Mammary epithelial cell (primary cell): ENCODE measurements at regions of chr6 and their contacts with region 1.

Region 1: GRCh38 chr6:160733050-160733646 is 31.1 kb downstream of the PLG start:
- DNase-seq: peak; percentile 35
- H3K4me3 ChIP-seq: no peak overlapping the region
- H3K27ac ChIP-seq: no peak overlapping the region
- H3K4me1 ChIP-seq: no peaks in the 10 kb centered on the region
- H3K27me3 ChIP-seq: no peaks in the 10 kb centered on the region
- CTCF ChIP-seq: peak; percentile 83 to 90

Region 2: GRCh38 chr6:160337301-160337700 is 395.8 kb before region 1 on chr6:
- CTCF ChIA-PET with region 1: no interaction called
- dilution Hi-C with region 1: no loop called
- in situ Hi-C with region 1: no loop called
- intact Hi-C with region 1: no loop called
- DNase-seq: peak; percentile 76
- H3K4me3 ChIP-seq: no peak overlapping the region
- H3K27ac ChIP-seq: no peak overlapping the region
- H3K4me1 ChIP-seq: peaks cover 16% of the 10 kb centered on the region
- H3K27me3 ChIP-seq: no peaks in the 10 kb centered on the region
- CTCF ChIP-seq: no peak

Region 3: DNA sequence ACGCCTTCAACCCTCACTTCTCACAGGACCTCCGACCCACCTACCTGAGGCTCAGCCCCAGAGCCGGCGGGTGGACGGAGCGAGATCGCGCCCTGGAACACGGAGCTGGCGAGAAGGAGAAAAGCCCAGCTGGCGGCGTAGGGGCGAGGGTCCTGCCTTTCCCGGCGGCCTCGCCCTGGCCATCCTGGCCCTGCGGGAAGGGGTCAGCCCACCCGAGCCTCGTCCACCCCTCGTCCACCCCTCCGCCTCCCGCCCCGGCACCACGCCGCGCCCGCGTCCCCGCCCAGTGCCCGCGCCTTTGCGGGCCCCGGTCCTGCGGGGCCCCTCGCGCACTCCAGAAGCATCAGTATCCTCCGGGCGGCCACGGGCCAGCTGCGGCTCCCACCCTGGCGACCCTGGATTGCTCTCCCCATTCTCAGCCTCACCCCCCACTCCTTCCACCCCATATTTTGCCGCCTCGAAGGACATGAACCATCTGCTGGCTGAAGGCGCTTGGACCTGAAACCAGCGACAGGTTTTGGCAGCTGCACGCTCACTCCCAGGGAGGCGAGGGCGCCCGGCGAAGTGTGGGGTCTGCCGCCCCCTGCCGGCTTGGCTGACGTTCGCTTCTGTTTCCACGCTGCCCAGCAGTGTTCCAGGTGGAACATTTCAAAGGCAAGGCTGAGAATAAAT is 34.0 kb after region 1 on chr6:
- CTCF ChIA-PET with region 1: no interaction called
- dilution Hi-C with region 1: no loop called
- in situ Hi-C with region 1: no loop called
- intact Hi-C with region 1: loop called (anchors 1 kb)
- DNase-seq: peak; percentile 52
- H3K4me3 ChIP-seq: peak overlapping the region; percentile 58 to 68 (median 61)
- H3K27ac ChIP-seq: no peak overlapping the region
- H3K4me1 ChIP-seq: peaks cover 4% of the 10 kb centered on the region
- H3K27me3 ChIP-seq: no peaks in the 10 kb centered on the region
- CTCF ChIP-seq: peak; percentile 76 to 95

Region 4: DNA sequence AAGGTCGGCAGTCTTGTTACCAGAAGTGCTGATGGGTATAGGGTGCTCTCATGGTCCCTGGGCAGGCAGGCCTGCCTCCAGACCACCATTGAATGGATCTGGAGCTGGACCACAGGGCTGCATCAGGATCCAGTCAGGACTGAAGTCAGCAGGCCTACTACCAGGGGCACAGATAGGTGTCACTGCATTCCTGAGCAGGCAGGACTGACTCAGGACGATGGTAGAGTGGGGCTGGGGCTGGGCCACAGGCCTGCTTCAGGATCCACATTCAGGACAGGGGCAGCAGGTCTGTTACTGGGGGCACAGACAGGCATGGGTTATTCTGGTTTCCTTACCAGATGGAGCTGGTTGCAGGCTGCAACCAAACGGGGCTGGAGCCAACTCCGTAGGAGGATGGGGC is 207.0 kb after region 1 on chr6:
- CTCF ChIA-PET with region 1: no interaction called
- dilution Hi-C with region 1: no loop called
- in situ Hi-C with region 1: no loop called
- intact Hi-C with region 1: no loop called
- DNase-seq: no peak
- H3K4me3 ChIP-seq: no peak overlapping the region
- H3K27ac ChIP-seq: no peak overlapping the region
- H3K4me1 ChIP-seq: no peaks in the 10 kb centered on the region
- H3K27me3 ChIP-seq: no peaks in the 10 kb centered on the region
- CTCF ChIP-seq: no peak

Region 5: GRCh38 chr6:161139766-161140553 is 406.8 kb after region 1 on chr6:
- CTCF ChIA-PET with region 1: no interaction called
- dilution Hi-C with region 1: no loop called
- in situ Hi-C with region 1: loop called in 1 of 2 experiments (anchors 25 kb)
- intact Hi-C with region 1: no loop called
- DNase-seq: no peak
- H3K4me3 ChIP-seq: no peak overlapping the region
- H3K27ac ChIP-seq: no peak overlapping the region
- H3K4me1 ChIP-seq: peaks cover 18% of the 10 kb centered on the region
- H3K27me3 ChIP-seq: no peaks in the 10 kb centered on the region
- CTCF ChIP-seq: no peak